ENCODE measurements at regions of chr2 and their contacts with region 1.

Region 1: DNA sequence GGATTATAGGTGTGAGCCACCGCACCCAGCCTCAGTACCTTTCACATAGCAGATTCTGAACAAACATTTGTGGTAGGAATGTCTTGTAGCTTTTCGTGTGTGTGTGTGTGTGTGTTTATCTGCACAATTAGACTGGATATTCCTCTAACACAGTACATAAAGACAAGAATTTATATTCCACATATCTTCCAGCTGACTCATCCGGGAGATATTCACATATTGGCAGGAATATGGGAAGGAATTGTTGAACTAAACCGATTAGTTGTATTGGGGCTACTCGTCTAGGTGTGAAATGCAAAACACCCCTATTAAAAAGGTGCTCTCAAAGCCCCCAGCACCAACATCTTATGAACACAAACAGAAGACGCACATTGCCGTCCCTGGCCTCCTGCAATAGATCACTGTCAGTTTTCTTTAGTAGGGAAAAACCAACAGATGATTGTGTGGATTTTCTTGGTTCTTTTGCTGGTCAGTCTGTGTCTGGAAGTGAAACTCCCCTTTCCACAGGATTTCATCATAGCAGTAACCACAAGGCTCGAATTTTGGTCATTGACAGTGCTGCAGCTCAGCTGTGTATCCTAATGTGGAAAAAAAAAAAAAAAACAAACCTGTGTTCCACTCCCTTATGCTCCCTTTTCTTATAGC is 208.5 kb upstream of the ACVR2A start:
- DNase-seq: peak; percentile 90
- ATAC-seq: peak; percentile 85
- H3K4me3 ChIP-seq: peak overlapping the region; percentile 26; the same call in 1 of the 2 replicates
- H3K27ac ChIP-seq: peak overlapping the region; percentile 39
- H3K4me1 ChIP-seq: peaks cover 25% of the 10 kb centered on the region
- H3K27me3 ChIP-seq: no peaks in the 10 kb centered on the region
- CTCF ChIP-seq: no peak

Region 2: GRCh38 chr2:147327613-147328012 is 308.7 kb before region 1 on chr2:
- CTCF ChIA-PET with region 1: no interaction called
- POLR2A ChIA-PET with region 1: no interaction called
- intact Hi-C with region 1: no loop called
- DNase-seq: no peak
- ATAC-seq: no peak
- H3K4me3 ChIP-seq: no peak overlapping the region
- H3K27ac ChIP-seq: no peak overlapping the region
- H3K4me1 ChIP-seq: no peaks in the 10 kb centered on the region
- H3K27me3 ChIP-seq: no peaks in the 10 kb centered on the region
- CTCF ChIP-seq: no peak

Region 3: GRCh38 chr2:147482111-147482895 is 154.1 kb before region 1 on chr2:
- CTCF ChIA-PET with region 1: no interaction called
- POLR2A ChIA-PET with region 1: no interaction called
- intact Hi-C with region 1: loop called (anchors 1 kb)
- DNase-seq: no peak
- ATAC-seq: no peak; the same call in 1 of the 2 replicates
- H3K4me3 ChIP-seq: no peak overlapping the region
- H3K27ac ChIP-seq: no peak overlapping the region
- H3K4me1 ChIP-seq: peaks cover 11% of the 10 kb centered on the region
- H3K27me3 ChIP-seq: no peaks in the 10 kb centered on the region
- CTCF ChIP-seq: no peak

Region 4: GRCh38 chr2:147715807-147716206 is 79.4 kb after region 1 on chr2:
- CTCF ChIA-PET with region 1: no interaction called
- POLR2A ChIA-PET with region 1: no interaction called
- intact Hi-C with region 1: loop called (anchors 10 kb)
- DNase-seq: no peak
- ATAC-seq: no peak
- H3K4me3 ChIP-seq: no peak overlapping the region
- H3K27ac ChIP-seq: no peak overlapping the region
- H3K4me1 ChIP-seq: peaks cover 21% of the 10 kb centered on the region
- H3K27me3 ChIP-seq: no peaks in the 10 kb centered on the region
- CTCF ChIP-seq: no peak